AG04450 (cell line): ENCODE measurements at regions of chr9 and their contacts with region 1.

Region 1: DNA sequence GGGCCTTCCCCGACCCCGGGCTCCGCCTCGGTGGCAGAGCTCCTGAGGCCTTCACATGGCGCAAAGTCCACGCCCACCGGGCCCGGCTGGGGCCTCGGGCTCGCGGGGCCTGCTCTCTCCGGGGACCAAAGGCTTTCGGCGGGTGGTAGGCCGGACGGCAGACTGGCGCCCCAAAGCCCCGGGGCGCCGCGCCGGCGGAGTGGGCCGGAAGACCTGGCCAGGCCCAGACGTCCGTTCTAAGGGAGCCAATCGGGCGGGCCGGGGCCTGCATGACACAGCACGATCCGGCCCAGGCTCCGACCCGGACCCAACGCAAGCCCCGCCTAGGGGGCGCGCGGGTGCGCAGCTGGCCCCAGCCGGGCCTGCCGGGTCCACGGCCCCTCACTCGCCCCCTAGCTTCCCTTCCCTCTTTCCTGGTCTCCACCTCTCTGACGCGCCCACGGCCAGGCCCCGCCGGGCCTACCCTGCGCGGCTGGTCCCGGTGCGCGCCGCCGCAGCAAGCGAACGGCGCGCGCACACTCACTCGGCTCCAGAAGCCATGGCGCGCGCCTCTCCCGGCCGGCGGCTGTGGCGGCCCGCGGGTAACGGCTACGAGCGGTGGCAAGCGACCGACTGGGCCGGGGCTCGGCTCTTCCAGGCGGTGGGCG is 488 bp downstream of the VCP start:
- DNase-seq: peak; percentile 58
- H3K4me3 ChIP-seq: peak overlapping the region; percentile 90
- H3K27ac ChIP-seq: peak overlapping the region; percentile 100
- H3K27me3 ChIP-seq: no peaks in the 10 kb centered on the region
- CTCF ChIP-seq: peak; percentile 34; the same call in 1 of the 2 replicates

Region 2: GRCh38 chr9:34989003-34989945 is 82.7 kb before region 1 on chr9 and contains the start of gene DNAJB5:
- CTCF ChIA-PET with region 1: interaction called, 8 read pairs
- POLR2A ChIA-PET with region 1: interaction called, 12 read pairs
- DNase-seq: peak; percentile 99
- H3K4me3 ChIP-seq: peak within 1 kb of the TSS; percentile 87
- H3K27ac ChIP-seq: peak within 1 kb of the TSS; percentile 70
- H3K27me3 ChIP-seq: no peaks in the 10 kb centered on the region
- CTCF ChIP-seq: no peak
- polyA plus RNA-seq, gene DNAJB5: 5.1 and 9.5 TPM in 2 replicates

Region 3: DNA sequence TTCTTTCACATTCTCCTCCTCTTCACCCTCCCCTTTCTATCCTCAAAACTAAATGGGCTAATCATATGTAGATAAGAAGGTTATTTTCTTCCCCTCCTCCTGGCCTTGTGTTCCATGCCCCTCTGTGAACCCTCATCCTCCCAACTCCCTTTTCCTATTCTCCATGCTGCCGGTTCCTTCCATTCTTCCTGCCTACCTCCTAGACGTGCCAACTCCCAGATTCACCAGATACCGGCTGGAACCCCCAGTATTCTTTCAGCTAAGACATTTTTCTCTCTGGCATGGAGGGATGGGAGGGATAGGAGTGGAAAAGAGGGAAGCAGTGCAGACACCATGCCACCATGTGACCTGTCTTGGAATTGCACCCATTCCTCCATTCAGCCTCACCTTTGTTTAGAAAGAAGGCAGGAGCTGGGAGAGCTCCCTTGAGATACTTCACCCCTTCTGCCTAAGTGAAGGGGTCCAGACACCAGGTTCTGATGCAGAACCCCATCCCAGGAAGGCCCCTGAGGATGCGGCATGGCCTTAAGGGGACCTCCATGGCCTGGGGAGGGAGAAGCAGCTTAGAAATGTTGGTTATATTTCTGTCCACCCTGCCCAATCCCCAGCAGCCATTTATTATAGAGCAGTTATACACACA is 77.6 kb before region 1 on chr9:
- CTCF ChIA-PET with region 1: interaction called, 3 read pairs
- POLR2A ChIA-PET with region 1: interaction called, 12 read pairs
- DNase-seq: no peak
- H3K4me3 ChIP-seq: no peak overlapping the region
- H3K27ac ChIP-seq: peak overlapping the region; percentile 85
- H3K27me3 ChIP-seq: no peaks in the 10 kb centered on the region
- CTCF ChIP-seq: peak; percentile 71

Region 4: GRCh38 chr9:35014517-35014916 is 57.4 kb before region 1 on chr9:
- CTCF ChIA-PET with region 1: no interaction called
- POLR2A ChIA-PET with region 1: no interaction called
- DNase-seq: no peak
- H3K4me3 ChIP-seq: no peak overlapping the region
- H3K27ac ChIP-seq: no peak overlapping the region
- H3K27me3 ChIP-seq: no peaks in the 10 kb centered on the region
- CTCF ChIP-seq: no peak

Region 5: GRCh38 chr9:35051069-35051967 is 20.6 kb before region 1 on chr9:
- CTCF ChIA-PET with region 1: interaction called, 27 read pairs
- POLR2A ChIA-PET with region 1: interaction called, 12 read pairs
- DNase-seq: no peak
- H3K4me3 ChIP-seq: no peak overlapping the region
- H3K27ac ChIP-seq: peak overlapping the region; percentile 31
- H3K27me3 ChIP-seq: no peaks in the 10 kb centered on the region
- CTCF ChIP-seq: peak; percentile 75

Region 6: GRCh38 chr9:35056571-35057270 is 15.2 kb before region 1 on chr9:
- CTCF ChIA-PET with region 1: interaction called, 27 read pairs
- POLR2A ChIA-PET with region 1: interaction called, 12 read pairs
- DNase-seq: no peak
- H3K4me3 ChIP-seq: no peak overlapping the region
- H3K27ac ChIP-seq: no peak overlapping the region
- H3K27me3 ChIP-seq: no peaks in the 10 kb centered on the region
- CTCF ChIP-seq: no peak

Region 7: DNA sequence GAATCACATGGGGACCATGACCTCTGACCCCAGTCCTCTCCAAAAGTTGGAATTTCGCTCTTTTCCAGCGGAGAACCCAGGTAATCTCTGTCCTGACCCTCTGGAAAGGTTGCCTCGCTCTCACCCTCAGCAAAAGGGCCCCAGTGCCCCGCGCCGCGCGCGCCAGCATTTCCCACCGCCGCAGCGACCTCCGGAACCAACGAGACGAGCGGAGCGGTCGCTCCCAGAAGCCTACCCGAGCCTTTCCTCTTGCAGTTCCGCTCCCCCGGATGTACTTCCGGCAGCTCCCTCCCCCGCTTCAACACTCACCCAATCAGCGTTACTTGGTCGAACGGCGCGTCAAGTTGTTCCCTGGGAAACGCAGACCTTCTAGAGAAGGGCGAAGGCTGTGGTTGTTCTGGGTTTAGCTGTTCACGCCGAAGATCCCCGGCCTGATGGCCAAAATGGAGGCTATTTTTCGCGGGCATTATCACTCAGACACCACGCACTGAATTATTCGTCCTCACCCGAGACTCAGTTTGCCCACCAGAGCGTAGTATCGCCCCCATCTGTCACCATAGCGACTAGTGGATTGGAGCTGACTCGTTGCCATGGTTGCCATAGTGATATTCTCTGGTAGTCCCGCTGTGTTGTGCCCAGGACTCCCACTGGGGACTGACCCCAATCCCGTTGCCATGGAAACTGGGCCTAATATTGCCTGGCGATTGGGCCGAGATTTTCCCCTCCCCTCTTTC is 31.2 kb after region 1 on chr9 and contains the start of gene STOML2:
- CTCF ChIA-PET with region 1: interaction called, 3 read pairs
- POLR2A ChIA-PET with region 1: interaction called, 11 read pairs
- DNase-seq: peak; percentile 90
- H3K4me3 ChIP-seq: peak within 1 kb of the TSS; percentile 82
- H3K27ac ChIP-seq: peak within 1 kb of the TSS; percentile 55
- H3K27me3 ChIP-seq: no peaks in the 10 kb centered on the region
- CTCF ChIP-seq: no peak
- polyA plus RNA-seq, gene STOML2: 125 and 151 TPM in 2 replicates

Region 8: DNA sequence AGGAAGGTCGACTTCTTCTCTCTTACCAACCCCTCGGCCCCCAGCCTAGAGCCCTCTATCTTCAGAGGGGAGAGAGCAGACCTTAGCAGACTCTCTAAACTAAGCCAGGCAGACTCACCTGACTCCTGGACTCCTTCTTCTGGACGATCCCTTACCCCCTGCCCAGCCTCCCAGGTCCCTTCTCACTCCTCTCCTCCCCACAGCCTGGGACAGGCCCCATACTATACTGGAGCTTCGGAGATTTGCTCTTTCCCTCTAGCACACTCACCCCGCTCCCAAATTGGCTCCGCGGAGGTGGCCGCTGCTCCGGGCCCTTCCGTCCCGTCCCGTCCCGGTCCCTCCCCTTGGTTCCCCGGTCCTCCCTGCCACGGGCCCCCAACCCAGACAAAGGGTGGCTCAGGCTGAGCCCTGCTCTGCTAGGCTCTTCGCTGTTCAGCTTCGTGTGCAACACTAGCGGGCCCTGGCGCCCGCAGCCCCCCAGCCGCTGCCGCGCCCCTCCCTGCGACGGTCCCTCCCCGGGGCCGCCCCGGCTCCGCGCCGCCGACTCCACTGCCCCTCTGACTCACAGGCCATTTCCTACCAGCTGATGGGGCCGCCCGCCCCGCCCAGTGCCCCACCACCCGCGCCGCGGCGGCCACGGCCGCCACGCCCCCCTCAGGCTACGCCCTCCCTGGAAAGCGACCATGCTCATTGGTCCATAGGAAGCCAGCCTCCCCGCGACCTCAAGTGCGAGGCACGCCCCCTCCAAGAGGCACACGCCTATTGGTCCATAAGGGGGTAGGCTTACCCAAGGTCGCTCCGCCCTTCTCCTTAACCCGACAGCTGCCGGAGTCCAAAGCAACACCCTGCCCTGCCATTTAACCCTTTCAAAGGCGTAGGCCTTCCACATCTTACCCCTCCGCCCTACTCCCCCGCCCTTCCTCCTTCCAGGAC is 39.3 kb after region 1 on chr9:
- CTCF ChIA-PET with region 1: interaction called, 3 read pairs
- POLR2A ChIA-PET with region 1: interaction called, 18 read pairs
- DNase-seq: peak; percentile 97
- H3K4me3 ChIP-seq: peak overlapping the region; percentile 84
- H3K27ac ChIP-seq: peak overlapping the region; percentile 84
- H3K27me3 ChIP-seq: no peaks in the 10 kb centered on the region
- CTCF ChIP-seq: no peak